ENCODE measurements at regions of chr20 and their contacts with region 1.

Region 1: GRCh38 chr20:45798935-45799642 is 7.3 kb downstream of the DNTTIP1 start:
- DNase-seq: peak; percentile 43 to 79 (median 57)
- ATAC-seq: peak; percentile 99
- H3K4me3 ChIP-seq: no peak overlapping the region
- H3K4me3 Mint-ChIP-seq: no peak overlapping the region
- H3K27ac ChIP-seq: peak overlapping the region in 1 of 2 donors; percentile 1
- H3K27ac Mint-ChIP-seq: no peak overlapping the region
- H3K4me1 ChIP-seq: peaks cover 5% of the 10 kb centered on the region
- H3K4me1 Mint-ChIP-seq: peaks cover 15% of the 10 kb centered on the region
- H3K27me3 ChIP-seq: no peaks in the 10 kb centered on the region
- H3K27me3 Mint-ChIP-seq: no peaks in the 10 kb centered on the region
- CTCF ChIP-seq: peak; percentile 75

Region 2: DNA sequence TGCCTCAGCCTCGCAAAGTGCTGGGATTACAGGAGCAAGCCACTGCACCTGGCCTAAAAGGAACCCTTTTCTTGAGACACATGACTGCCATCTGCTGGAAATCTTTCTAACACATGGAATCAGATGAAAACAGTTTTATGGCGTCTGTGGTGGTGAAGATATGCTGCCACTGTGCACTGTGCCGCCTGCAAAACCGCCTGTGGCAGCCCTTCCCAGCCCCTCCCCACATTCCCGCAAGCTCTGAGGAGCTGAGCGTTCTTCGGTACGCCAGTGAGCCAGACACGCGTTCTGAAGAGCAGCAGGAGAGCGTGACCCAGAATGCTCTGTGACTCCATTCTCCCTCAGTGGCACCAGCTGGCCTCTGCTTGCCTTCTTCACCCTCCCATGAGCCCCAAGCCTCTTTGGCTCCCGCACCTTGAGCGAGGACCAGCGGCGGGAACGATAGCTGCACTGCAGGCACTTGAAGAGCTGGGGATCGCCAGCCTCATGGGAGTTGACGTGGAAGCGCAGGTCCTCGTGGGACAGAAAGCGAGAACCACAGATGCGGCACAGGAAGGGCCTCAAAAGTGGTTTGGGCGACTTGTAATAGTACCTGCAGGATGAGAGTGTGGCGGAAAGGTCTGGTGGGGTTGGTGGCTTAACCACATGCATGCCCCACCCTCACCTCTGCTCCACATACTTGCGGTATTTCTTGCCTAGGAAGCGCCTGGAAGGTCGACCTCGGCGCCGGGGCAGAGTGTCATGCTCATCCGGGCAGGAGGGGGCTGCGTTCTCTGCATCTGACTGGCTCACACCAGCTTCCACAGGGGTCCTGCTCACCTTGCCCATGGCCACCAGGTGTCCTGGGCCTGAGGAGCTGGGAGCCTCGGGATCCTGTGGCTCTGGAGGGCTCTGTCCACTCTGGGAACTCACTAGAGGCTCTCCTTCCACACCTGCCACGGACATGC is 164.2 kb after region 1 on chr20:
- CTCF ChIA-PET with region 1: interaction called, 7 read pairs
- POLR2A ChIA-PET with region 1: no interaction called
- intact Hi-C with region 1: loop called (anchors 1 to 2 kb)
- DNase-seq: peak in 3 of 14 experiments; percentile 53 to 69 (median 66)
- ATAC-seq: peak; percentile 61
- H3K4me3 ChIP-seq: no peak overlapping the region
- H3K4me3 Mint-ChIP-seq: peak overlapping the region; percentile 30
- H3K27ac ChIP-seq: no peak overlapping the region
- H3K27ac Mint-ChIP-seq: peak overlapping the region; percentile 59
- H3K4me1 ChIP-seq: peaks cover 13% of the 10 kb centered on the region
- H3K4me1 Mint-ChIP-seq: peaks cover 4% of the 10 kb centered on the region
- H3K27me3 ChIP-seq: no peaks in the 10 kb centered on the region
- H3K27me3 Mint-ChIP-seq: no peaks in the 10 kb centered on the region
- CTCF ChIP-seq: no peak

Region 3: GRCh38 chr20:46174469-46175128 is 375.5 kb after region 1 on chr20:
- CTCF ChIA-PET with region 1: no interaction called
- POLR2A ChIA-PET with region 1: no interaction called
- intact Hi-C with region 1: loop called in 1 of 2 experiments (anchors 10 kb)
- DNase-seq: peak; percentile 50 to 83 (median 64)
- ATAC-seq: peak; percentile 90
- H3K4me3 ChIP-seq: no peak overlapping the region
- H3K4me3 Mint-ChIP-seq: no peak overlapping the region
- H3K27ac ChIP-seq: no peak overlapping the region
- H3K27ac Mint-ChIP-seq: no peak overlapping the region
- H3K4me1 ChIP-seq: peaks cover 3% of the 10 kb centered on the region
- H3K4me1 Mint-ChIP-seq: no peaks in the 10 kb centered on the region
- H3K27me3 ChIP-seq: peaks cover 25 to 49% of the 10 kb centered on the region in 2 experiments
- H3K27me3 Mint-ChIP-seq: peaks cover 90% of the 10 kb centered on the region
- CTCF ChIP-seq: peak; percentile 39

Region 4: DNA sequence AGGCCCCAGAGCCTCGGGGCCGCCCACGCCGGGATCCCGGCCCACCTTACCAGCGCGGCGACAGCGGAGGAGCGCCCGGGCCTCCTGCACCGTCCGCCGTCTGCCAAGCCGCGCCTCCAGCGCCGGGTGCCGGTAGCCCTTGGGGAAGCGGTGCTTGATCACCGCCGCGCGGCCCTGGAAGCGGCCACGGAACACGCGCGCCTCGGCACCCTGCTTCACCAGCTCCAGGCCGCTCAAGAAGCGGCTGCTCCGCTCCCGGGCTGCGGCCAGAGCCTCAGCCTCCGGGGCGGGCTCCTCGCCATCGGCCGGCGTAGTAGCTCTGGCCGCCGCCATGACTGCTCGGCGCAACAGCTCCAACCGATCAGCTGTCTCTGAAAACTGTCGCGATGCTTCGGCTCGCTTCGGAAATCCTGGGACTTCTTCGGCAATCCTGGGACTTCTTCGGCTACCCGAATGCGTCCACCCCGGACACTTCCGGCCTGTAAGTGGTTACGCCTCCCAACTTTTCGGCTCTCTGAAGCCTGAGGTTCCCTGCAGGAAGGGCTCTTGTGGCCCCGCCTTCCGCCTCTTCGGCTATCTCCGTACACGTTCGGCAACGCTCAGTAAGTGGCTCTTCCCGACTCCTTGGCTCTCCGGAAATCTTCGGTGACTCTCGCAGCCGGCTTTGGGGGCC is 890.1 kb after region 1 on chr20 and contains the start of gene TP53RK:
- CTCF ChIA-PET with region 1: no interaction called
- POLR2A ChIA-PET with region 1: no interaction called
- intact Hi-C with region 1: loop called in 1 of 2 experiments (anchors 10 kb)
- DNase-seq: peak; percentile 86 to 98 (median 96)
- ATAC-seq: peak; percentile 97
- H3K4me3 ChIP-seq: peak within 1 kb of the TSS; percentile 92
- H3K4me3 Mint-ChIP-seq: peak within 1 kb of the TSS; percentile 99
- H3K27ac ChIP-seq: peak within 1 kb of the TSS; percentile 68 to 75
- H3K27ac Mint-ChIP-seq: peak within 1 kb of the TSS; percentile 94
- H3K4me1 ChIP-seq: peaks cover 30% of the 10 kb centered on the region
- H3K4me1 Mint-ChIP-seq: peaks cover 56% of the 10 kb centered on the region
- H3K27me3 ChIP-seq: no peaks in the 10 kb centered on the region
- H3K27me3 Mint-ChIP-seq: no peaks in the 10 kb centered on the region
- CTCF ChIP-seq: peak; percentile 28
- total RNA-seq, gene TP53RK: 3.9 to 4.5 TPM

Region 5: DNA sequence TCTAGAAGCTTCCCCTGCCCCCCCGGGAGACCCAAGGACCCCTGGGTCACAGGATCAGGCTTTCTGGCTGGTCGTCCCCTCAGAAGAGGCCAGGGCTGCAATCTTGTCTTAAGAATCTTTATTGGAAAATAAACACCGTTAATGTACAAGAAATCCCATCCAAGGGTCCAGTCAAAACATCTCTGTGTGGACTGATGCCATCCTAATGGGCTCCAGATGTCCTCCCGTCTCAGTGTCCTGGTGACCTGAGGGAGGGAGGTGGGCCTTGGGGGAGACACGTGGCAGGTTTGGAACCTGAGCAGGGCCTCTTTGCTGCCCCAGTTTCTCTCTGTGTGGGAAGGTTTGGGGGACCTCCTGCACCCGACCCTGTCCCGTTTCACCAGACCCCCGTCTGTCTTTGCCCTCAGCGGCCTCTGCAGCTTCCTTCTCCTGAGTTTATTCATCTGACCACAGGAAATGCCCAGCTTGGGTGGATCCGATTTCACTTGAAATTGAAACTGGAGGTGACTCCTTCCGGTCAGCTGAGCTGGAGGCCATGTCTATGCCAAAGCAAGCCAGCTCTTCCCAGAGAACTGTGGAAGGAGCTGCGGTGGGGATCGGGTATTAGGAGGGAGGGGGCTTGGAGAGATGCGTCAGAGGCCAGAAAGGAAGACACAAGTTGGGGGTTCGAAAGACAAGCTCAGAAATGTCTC is 985.5 kb after region 1 on chr20:
- CTCF ChIA-PET with region 1: no interaction called
- POLR2A ChIA-PET with region 1: no interaction called
- intact Hi-C with region 1: no loop called
- DNase-seq: no peak
- ATAC-seq: no peak
- H3K4me3 ChIP-seq: no peak overlapping the region
- H3K4me3 Mint-ChIP-seq: no peak overlapping the region
- H3K27ac ChIP-seq: no peak overlapping the region
- H3K27ac Mint-ChIP-seq: no peak overlapping the region
- H3K4me1 ChIP-seq: no peaks in the 10 kb centered on the region
- H3K4me1 Mint-ChIP-seq: no peaks in the 10 kb centered on the region
- H3K27me3 ChIP-seq: peaks cover 7 to 10% of the 10 kb centered on the region in 2 experiments
- H3K27me3 Mint-ChIP-seq: peaks cover 28% of the 10 kb centered on the region
- CTCF ChIP-seq: no peak

Measured in CD4-positive, alpha-beta T cell (primary cell).